Dendritic cell treated with granulocyte-macrophage colony-stimulating factor and Interleukin-4, amounts not matched to agents 40 ng/mL and 50 ng/mL, for 4 days (primary cell): ENCODE measurements at regions of chr7 and their contacts with region 1.

Region 1: DNA sequence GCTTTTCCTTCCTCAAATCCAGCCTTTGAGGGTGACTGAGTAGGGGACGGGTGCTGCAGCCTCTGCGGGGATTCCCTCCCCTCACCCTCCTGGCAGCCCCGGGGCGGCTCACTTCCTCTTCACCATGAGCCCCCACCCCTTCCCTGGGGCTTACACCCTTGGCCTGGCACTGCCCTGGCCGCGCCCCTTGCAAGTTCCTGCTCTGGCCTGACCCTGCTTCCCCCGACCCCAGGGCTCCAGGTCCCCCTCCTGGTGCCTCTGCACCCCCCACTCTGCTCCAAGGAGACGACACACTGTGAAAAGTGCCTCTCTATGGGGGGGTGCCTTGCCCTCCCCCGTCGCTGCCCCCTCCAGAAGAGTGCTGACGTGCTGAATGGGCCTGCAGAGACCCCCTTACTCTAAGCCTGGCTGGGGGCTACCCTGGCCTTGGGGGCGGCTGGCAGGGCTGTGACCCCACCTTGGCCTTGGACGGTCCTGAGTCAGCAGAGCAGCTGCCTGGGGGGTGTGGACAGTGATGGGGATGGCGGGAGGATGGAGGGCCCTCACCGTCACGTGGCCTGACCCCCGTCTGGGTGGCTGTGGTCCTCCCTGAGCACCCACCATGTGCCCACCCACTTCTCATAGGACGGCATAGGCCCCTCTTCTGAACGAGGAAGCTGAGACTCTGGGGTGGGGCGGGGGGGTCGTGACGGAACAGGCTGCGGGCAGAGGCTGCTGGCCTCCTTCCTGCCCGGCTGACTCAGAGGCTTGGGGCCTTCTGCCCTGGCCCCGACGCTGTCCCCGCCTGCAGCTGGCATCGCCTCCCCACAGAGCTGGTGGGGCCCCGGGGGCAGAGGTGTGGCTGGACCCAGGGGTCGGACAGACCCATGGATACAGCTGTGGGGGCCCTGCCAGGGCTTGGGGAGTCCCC is 9.8 kb downstream of the LFNG start:
- H3K4me3 Mint-ChIP-seq: peak overlapping the region; percentile 63
- H3K27ac Mint-ChIP-seq: peak overlapping the region; percentile 98
- H3K4me1 Mint-ChIP-seq: peaks cover 80% of the 10 kb centered on the region
- H3K27me3 Mint-ChIP-seq: no peaks in the 10 kb centered on the region

Region 2: GRCh38 chr7:1925349-1925748 is 604.1 kb before region 1 on chr7:
- intact Hi-C with region 1: no loop called
- H3K4me3 Mint-ChIP-seq: no peak overlapping the region
- H3K27ac Mint-ChIP-seq: peak overlapping the region; percentile 61
- H3K4me1 Mint-ChIP-seq: peaks cover 78% of the 10 kb centered on the region
- H3K27me3 Mint-ChIP-seq: no peaks in the 10 kb centered on the region

Region 3: DNA sequence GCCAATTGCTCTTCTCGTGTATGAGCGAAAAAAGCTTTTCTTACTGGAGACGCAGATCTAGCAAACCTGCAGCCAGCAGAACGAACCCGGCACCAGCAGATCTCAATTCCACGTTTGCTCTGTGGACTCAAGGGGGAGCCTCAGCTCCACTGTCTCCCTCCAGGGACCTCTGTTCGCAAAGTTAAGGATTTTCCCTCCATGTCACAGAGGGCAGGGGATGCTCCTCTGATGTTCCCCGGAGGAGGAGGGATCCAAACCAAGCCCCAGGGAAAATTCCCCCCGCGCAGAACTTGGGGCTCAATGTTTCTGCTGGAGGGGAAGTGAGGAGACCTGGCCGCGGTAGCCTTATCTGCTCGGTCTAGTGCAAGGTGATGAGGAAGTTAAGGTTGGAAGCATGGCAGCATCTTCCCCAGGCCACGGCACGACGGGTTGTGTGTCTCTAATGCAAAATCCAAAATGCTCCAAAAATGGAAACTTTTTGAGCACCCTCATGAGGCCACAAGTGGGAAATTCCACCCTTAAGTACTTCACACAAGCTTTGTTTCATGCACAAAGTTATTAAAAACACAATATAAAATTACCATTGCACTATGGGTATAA is 38.4 kb after region 1 on chr7:
- intact Hi-C with region 1: loop called (anchors 5 kb)
- H3K4me3 Mint-ChIP-seq: no peak overlapping the region
- H3K27ac Mint-ChIP-seq: no peak overlapping the region
- H3K4me1 Mint-ChIP-seq: peaks cover 35% of the 10 kb centered on the region
- H3K27me3 Mint-ChIP-seq: no peaks in the 10 kb centered on the region

Region 4: DNA sequence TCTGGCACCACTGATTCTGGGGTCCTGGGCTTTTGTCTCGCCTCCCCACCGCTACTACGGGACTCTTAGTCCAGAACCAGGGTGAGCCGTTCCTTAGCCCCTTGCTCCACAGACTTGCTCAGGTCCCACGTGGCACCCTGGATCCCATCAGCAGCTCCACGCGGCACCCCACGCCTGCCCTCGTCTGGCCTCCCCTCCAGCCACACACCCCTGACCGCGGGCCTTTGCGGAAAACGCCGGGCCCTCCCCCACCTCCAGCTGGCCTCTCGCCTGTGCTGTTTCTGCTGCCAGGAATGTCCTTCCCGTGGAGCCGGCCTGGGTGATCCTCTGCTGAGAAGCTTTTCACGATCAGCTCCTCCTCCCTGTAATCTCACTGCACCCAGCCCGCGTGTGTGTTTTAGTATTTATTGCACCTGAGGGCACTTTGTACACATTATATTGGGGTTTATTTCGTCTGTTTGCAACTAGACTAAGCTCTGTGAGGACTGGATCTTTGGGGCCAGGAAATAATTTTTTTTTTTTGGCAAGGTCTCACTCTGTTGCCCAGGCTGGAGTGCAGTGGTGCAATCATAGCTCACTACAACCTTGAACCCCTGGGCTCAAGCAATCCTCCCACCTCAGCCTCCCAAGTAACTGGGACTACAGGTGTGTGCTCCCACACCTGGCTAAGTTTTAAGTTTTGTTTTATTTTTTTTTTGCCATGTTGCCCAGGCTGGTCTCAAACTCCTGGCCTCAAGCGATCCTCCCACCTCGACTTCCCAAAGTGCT is 91.8 kb after region 1 on chr7:
- intact Hi-C with region 1: no loop called
- H3K4me3 Mint-ChIP-seq: no peak overlapping the region
- H3K27ac Mint-ChIP-seq: peak overlapping the region; percentile 73
- H3K4me1 Mint-ChIP-seq: peaks cover 49% of the 10 kb centered on the region
- H3K27me3 Mint-ChIP-seq: peaks cover 15% of the 10 kb centered on the region

Region 5: GRCh38 chr7:2632733-2633537 is 103.5 kb after region 1 on chr7:
- intact Hi-C with region 1: loop called (anchors 10 kb)
- H3K4me3 Mint-ChIP-seq: peak overlapping the region; percentile 99
- H3K27ac Mint-ChIP-seq: peak overlapping the region; percentile 100
- H3K4me1 Mint-ChIP-seq: peaks cover 61% of the 10 kb centered on the region
- H3K27me3 Mint-ChIP-seq: no peaks in the 10 kb centered on the region